ENCODE measurements at regions of chr5 and their contacts with region 1.

Region 1: DNA sequence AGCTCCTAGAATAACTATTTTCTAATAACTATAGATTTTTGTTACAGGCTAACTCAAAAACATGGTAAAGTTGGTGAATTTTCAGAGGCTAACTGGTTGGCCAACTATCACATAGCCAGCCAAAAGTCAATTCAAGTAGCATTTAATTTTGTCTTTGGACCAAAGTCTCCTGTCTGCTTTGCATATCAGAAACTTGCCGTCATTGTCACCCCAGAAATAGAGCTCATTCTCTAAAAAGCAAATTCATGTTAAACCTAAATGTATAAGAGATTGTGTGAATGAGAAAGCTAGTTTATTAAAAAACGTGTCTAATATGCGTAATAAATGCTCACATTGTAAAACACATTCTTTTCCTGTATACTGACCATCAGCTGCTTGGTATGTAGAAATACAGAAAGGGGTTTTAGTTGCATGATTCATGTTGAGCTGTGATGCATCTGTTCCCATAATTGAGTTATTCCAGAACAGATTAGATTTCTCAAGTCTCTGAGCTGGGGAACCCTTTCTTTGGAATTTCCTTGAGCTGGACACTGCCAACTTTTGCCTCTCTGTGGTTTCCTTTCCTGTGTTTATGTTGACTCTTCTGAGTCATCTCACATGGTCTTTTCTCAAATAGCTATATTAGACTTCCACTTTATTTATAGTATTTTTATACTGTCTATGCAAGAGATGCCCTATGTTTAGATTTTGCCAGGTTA is 7.3 kb downstream of the SRFBP1 start:
- DNase-seq: no peak
- ATAC-seq: peak in 6 of 8 donors; percentile 38 to 90 (median 72)
- H3K4me3 ChIP-seq: no peak overlapping the region
- H3K27ac ChIP-seq: peak overlapping the region in 2 of 10 donors; percentile 12 to 70
- H3K4me1 ChIP-seq: peaks cover 0 to 28% (median 21%) of the 10 kb centered on the region in 9 donors
- H3K27me3 ChIP-seq: no peaks in the 10 kb centered on the region
- CTCF ChIP-seq: no peak

Region 2: DNA sequence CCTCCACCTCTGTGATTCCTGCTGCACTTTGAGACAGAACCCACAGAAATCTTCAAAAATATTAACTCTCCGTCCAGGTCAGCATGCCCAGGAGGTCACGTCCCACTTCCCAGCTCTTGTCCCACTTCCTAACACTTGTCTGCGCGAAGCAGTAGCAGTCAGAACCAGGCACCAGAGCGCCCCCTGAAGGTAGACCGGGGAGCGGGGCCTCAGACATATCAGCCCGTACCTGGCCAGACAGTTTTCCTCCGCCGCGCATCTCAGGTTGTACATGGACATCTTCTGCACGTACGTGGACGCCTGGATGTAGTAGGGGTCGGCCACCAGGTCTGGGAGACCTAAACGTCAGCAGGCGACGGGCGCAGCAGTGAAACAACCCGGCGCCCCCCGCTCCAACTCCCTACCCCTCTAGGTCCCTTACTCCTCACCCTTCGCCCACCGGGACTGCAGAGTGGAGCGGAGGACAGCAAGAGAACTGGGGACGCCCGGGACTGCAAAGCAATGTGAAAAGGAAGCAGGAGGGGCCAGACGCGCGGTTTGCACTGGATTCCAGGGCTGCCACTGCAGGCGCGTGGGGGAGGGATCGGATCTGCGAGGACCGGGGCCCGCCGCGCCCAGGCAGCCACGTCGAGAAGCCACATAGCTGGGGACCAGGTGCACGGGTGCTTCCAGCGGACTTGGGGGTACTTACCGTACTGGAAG is 107.8 kb after region 1 on chr5:
- intact Hi-C with region 1: loop called in 5 of 10 experiments (anchors 10 kb)
- DNase-seq: peak; percentile 70 to 71
- ATAC-seq: peak; percentile 64 to 83 (median 78)
- H3K4me3 ChIP-seq: peak overlapping the region; percentile 26 to 66 (median 60)
- H3K27ac ChIP-seq: peak overlapping the region in 5 of 10 donors; percentile 45 to 73 (median 48)
- H3K4me1 ChIP-seq: peaks cover 0 to 35% (median 20%) of the 10 kb centered on the region in 9 donors
- H3K27me3 ChIP-seq: peaks cover 0 to 37% (median 11%) of the 10 kb centered on the region in 7 donors
- CTCF ChIP-seq: peak; percentile 12 to 78 (median 70)

Region 3: GRCh38 chr5:122089096-122090013 is 120.3 kb after region 1 on chr5:
- intact Hi-C with region 1: loop called in 1 of 10 experiments (anchors 10 kb)
- DNase-seq: no peak
- ATAC-seq: peak in 4 of 8 donors; percentile 33 to 71 (median 56)
- H3K4me3 ChIP-seq: no peak overlapping the region
- H3K27ac ChIP-seq: peak overlapping the region in 4 of 10 donors; percentile 5 to 38 (median 27)
- H3K4me1 ChIP-seq: peaks cover 0 to 6% (median 0%) of the 10 kb centered on the region in 9 donors
- H3K27me3 ChIP-seq: no peaks in the 10 kb centered on the region
- CTCF ChIP-seq: no peak

Region 4: GRCh38 chr5:122101636-122102285 is 132.7 kb after region 1 on chr5:
- intact Hi-C with region 1: loop called in 4 of 10 experiments (anchors 2 to 10 kb)
- DNase-seq: no peak
- ATAC-seq: no peak
- H3K4me3 ChIP-seq: no peak overlapping the region
- H3K27ac ChIP-seq: no peak overlapping the region
- H3K4me1 ChIP-seq: no peaks in the 10 kb centered on the region
- H3K27me3 ChIP-seq: no peaks in the 10 kb centered on the region
- CTCF ChIP-seq: peak; percentile 20 to 70 (median 57)

Measured in heart right ventricle (tissue), 16 donors.